Activated B cell treated with CpG ODN at 0.5 μM for 24 hours (primary cell): ENCODE measurements at regions of chr3 and their contacts with region 1.

Region 1: GRCh38 chr3:13073326-13074005 is at the start of gene IQSEC1:
- DNase-seq: peak; percentile 76
- ATAC-seq: peak; percentile 66
- H3K4me3 Mint-ChIP-seq: peak within 1 kb of the TSS; percentile 86
- H3K27ac Mint-ChIP-seq: peak within 1 kb of the TSS; percentile 85
- H3K4me1 Mint-ChIP-seq: peaks cover 62% of the 10 kb centered on the region
- H3K27me3 Mint-ChIP-seq: no peaks in the 10 kb centered on the region
- CTCF ChIP-seq: no peak
- total RNA-seq, gene IQSEC1: 260 and 296 TPM in 2 replicates

Region 2: DNA sequence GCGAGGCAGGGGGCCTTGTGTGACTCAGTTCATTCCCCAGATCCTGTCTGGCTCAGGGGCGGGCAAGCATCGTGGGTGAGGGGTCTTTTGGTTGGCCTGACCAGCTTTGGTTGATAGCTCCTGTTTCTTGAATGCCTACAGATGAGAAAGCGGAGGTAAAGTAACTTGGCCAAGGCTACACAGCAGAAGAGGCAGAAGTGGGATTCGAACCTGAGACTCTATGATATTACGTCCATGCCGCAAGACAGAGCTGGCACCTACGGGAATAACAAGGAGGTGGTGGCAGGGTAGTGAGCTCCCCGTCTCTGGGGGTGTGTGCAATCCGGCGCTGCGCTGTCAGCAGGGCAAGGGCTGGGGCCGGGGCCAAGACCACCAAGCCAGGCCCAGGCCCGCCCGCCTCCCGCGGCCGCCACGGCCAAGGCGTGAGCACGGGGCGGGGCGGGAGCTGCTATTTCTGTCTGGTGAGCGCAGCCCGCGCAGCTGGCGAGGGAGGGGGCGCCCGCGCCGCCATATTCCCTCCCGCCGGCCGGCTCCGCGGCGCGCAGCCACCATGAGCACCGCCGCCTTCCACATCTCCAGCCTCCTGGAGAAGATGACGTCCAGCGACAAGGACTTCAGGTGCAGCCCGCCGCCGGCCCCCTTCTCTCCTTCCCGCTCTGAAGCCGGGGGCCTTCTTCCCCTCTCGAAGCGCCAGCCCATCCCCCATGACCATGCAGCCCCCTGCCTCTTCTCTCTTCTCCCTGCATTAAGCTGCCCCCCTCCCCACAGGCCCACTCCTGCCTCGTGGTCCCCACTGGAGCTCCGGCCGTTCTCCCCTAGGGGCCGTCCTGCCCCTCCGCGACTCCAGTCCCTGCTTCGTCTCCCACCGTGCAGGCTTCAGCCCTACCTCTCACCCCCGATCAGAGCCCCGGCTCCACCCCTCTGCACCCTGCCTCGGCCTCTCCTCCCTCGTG is 277.0 kb before region 1 on chr3 and contains the start of gene CAND2:
- CTCF ChIA-PET with region 1: no interaction called
- POLR2A ChIA-PET with region 1: no interaction called
- intact Hi-C with region 1: no loop called
- DNase-seq: peak; percentile 46
- ATAC-seq: peak; percentile 78
- H3K4me3 Mint-ChIP-seq: peak within 1 kb of the TSS; percentile 87
- H3K27ac Mint-ChIP-seq: no peak within 1 kb of the TSS
- H3K4me1 Mint-ChIP-seq: peaks cover 20% of the 10 kb centered on the region
- H3K27me3 Mint-ChIP-seq: peaks cover 3% of the 10 kb centered on the region
- CTCF ChIP-seq: no peak
- total RNA-seq, gene CAND2: 0.22 and 0.42 TPM in 2 replicates

Region 3: DNA sequence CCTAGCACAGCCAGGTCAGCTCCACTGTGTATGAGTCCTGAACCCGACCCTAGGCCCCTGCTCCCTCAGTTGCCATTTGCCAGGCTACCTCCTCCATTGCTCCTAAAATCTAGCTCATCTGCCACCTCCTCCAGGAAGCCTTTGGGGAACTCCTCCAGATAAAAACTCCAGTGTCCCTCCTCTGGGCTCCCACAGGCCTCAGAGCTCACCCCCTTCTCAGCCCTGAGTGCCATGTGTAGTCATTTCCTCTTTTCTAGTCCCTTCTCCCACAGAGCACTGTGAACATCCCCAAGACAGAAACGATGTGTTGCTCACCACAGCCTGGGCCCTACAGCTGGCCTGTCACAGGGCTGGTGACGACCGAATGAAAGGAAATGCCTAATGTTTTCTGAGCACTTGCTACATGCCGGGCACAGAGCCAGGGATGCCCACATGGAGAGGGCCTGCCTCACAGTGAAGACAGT is 61.2 kb before region 1 on chr3:
- CTCF ChIA-PET with region 1: no interaction called
- POLR2A ChIA-PET with region 1: interaction called, 17 read pairs
- intact Hi-C with region 1: no loop called
- DNase-seq: no peak
- ATAC-seq: peak; percentile 36
- H3K4me3 Mint-ChIP-seq: peak overlapping the region; percentile 87
- H3K27ac Mint-ChIP-seq: peak overlapping the region; percentile 95
- H3K4me1 Mint-ChIP-seq: peaks cover 98% of the 10 kb centered on the region
- H3K27me3 Mint-ChIP-seq: no peaks in the 10 kb centered on the region
- CTCF ChIP-seq: no peak